Left ventricle myocardium inferior (tissue), 1 donor: ENCODE measurements at regions of chr17 and their contacts with region 1.

Region 1: GRCh38 chr17:34306466-34306865 is 12.8 kb upstream of the CCL8 start:
- DNase-seq: no peak
- H3K4me3 ChIP-seq: no peak overlapping the region
- H3K27ac ChIP-seq: peak overlapping the region; percentile 68
- H3K4me1 ChIP-seq: peaks cover 47% of the 10 kb centered on the region
- H3K27me3 ChIP-seq: no peaks in the 10 kb centered on the region
- CTCF ChIP-seq: peak; percentile 70

Region 2: GRCh38 chr17:34361478-34362061 is 55.1 kb after region 1 on chr17:
- intact Hi-C with region 1: loop called (anchors 10 kb)
- DNase-seq: peak; percentile 89
- H3K4me3 ChIP-seq: no peak overlapping the region
- H3K27ac ChIP-seq: no peak overlapping the region
- H3K4me1 ChIP-seq: peaks cover 8% of the 10 kb centered on the region
- H3K27me3 ChIP-seq: peaks cover 36% of the 10 kb centered on the region
- CTCF ChIP-seq: peak; percentile 100

Region 3: DNA sequence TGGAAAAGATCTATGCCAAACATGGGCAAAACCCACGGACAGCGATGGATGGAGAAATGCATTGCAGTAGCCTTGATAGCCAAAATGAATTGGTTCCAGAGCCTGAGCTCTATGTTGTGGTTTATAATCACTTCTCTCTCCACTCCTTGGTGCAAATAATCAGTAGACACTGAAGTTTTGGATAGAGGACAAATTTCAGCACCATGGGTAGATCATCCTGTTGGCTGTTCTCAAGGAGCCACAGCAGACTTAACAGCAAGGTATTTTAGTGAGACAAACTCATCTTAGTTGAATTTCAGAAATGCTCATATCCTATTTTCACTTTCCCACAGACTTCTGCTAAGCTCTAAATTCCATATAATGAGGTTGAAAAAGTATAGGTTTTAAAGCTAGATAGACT is 144.8 kb after region 1 on chr17:
- intact Hi-C with region 1: no loop called
- DNase-seq: no peak
- H3K4me3 ChIP-seq: no peak overlapping the region
- H3K27ac ChIP-seq: no peak overlapping the region
- H3K4me1 ChIP-seq: no peaks in the 10 kb centered on the region
- H3K27me3 ChIP-seq: peaks cover 65% of the 10 kb centered on the region
- CTCF ChIP-seq: no peak